Calu3 (cell line): ENCODE measurements at regions of chr7 and their contacts with region 1.

Region 1: GRCh38 chr7:18421297-18422002 is 74.1 kb upstream of the HDAC9 start:
- DNase-seq: no peak
- H3K4me3 Mint-ChIP-seq: no peak overlapping the region
- H3K27ac Mint-ChIP-seq: no peak overlapping the region
- H3K4me1 Mint-ChIP-seq: peaks cover 10% of the 10 kb centered on the region
- H3K27me3 Mint-ChIP-seq: no peaks in the 10 kb centered on the region
- CTCF ChIP-seq: no peak

Region 2: GRCh38 chr7:17444673-17445072 is 976.8 kb before region 1 on chr7:
- CTCF ChIA-PET with region 1: no interaction called
- intact Hi-C with region 1: no loop called
- DNase-seq: peak; percentile 53
- H3K4me3 Mint-ChIP-seq: peak overlapping the region; percentile 20
- H3K27ac Mint-ChIP-seq: peak overlapping the region; percentile 74
- H3K4me1 Mint-ChIP-seq: peaks cover 71% of the 10 kb centered on the region
- H3K27me3 Mint-ChIP-seq: no peaks in the 10 kb centered on the region
- CTCF ChIP-seq: no peak

Region 3: GRCh38 chr7:18370633-18371032 is 50.8 kb before region 1 on chr7:
- CTCF ChIA-PET with region 1: no interaction called
- intact Hi-C with region 1: loop called (anchors 5 kb)
- DNase-seq: no peak
- H3K4me3 Mint-ChIP-seq: no peak overlapping the region
- H3K27ac Mint-ChIP-seq: no peak overlapping the region
- H3K4me1 Mint-ChIP-seq: no peaks in the 10 kb centered on the region
- H3K27me3 Mint-ChIP-seq: no peaks in the 10 kb centered on the region
- CTCF ChIP-seq: no peak

Region 4: DNA sequence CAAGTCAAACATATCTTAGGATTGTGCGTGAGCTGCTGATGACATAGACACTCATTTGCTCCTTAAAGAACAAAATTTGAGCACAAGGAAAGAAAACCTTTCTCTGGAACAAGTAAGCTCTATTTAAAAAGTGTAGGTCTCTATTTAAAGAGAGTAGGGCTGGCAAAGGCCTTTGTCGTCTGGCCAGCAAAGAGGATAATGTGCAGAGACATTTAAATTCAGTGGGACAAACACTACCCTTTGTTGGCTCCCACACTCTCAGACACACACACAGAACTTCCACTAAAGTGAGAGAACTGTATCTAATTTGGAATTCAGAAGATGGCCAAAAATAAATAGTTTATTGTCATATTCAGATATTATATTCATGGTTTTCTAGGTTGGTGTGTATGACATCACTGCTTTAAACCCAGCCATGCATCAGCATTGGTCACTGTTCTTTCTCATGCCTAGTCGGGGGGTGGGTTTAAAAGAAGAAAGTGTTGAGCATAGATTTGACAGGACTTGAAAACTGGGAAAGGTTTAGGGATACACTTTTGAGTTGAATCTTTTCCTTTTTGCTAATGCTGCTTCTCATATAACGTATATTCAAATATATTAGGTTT is 24.6 kb after region 1 on chr7:
- CTCF ChIA-PET with region 1: no interaction called
- intact Hi-C with region 1: no loop called
- DNase-seq: no peak
- H3K4me3 Mint-ChIP-seq: no peak overlapping the region
- H3K27ac Mint-ChIP-seq: no peak overlapping the region
- H3K4me1 Mint-ChIP-seq: no peaks in the 10 kb centered on the region
- H3K27me3 Mint-ChIP-seq: no peaks in the 10 kb centered on the region
- CTCF ChIP-seq: no peak